Colonic mucosa (tissue), 4 donors: ENCODE measurements at regions of chr7 and their contacts with region 1.

Region 1: GRCh38 chr7:105060437-105060836 is 46.4 kb downstream of the KMT2E start:
- DNase-seq: no peak
- H3K4me3 ChIP-seq: no peak overlapping the region
- H3K27ac ChIP-seq: no peak overlapping the region
- H3K4me1 ChIP-seq: no peaks in the 10 kb centered on the region
- H3K27me3 ChIP-seq: no peaks in the 10 kb centered on the region
- CTCF ChIP-seq: no peak

Region 2: DNA sequence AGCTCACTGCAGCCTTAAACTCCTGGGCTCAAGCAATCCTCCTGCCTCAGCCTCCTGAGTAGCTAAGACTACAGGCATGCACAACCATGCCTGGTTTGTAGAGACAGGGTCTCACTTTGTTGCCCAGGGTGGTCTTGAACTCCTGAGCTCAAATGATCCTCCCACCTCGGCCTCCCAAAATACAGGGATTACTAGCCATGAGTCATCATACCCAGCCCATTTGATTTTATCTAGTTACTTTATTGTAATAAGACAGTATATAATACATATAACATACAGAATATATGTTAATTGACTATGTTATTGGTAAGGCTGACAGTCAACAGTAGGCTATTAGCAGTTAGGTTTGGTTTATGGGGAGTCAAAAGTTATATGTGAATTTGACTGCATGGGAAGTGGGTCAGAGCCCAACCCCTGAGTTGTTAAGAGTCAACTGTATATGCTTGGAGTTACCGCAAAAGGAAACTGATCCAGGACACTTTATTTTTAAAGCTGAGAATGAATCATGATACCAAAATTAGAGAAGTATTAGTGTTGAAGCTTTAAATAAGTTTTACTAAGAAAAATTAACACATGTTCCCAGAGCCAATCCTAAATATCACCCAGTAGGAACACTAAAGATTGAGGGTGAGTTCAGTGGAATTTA is 67.1 kb before region 1 on chr7:
- intact Hi-C with region 1: loop called (anchors 10 kb)
- DNase-seq: no peak
- H3K4me3 ChIP-seq: no peak overlapping the region
- H3K27ac ChIP-seq: no peak overlapping the region
- H3K4me1 ChIP-seq: peaks cover 6% of the 10 kb centered on the region
- H3K27me3 ChIP-seq: no peaks in the 10 kb centered on the region
- CTCF ChIP-seq: no peak

Region 3: DNA sequence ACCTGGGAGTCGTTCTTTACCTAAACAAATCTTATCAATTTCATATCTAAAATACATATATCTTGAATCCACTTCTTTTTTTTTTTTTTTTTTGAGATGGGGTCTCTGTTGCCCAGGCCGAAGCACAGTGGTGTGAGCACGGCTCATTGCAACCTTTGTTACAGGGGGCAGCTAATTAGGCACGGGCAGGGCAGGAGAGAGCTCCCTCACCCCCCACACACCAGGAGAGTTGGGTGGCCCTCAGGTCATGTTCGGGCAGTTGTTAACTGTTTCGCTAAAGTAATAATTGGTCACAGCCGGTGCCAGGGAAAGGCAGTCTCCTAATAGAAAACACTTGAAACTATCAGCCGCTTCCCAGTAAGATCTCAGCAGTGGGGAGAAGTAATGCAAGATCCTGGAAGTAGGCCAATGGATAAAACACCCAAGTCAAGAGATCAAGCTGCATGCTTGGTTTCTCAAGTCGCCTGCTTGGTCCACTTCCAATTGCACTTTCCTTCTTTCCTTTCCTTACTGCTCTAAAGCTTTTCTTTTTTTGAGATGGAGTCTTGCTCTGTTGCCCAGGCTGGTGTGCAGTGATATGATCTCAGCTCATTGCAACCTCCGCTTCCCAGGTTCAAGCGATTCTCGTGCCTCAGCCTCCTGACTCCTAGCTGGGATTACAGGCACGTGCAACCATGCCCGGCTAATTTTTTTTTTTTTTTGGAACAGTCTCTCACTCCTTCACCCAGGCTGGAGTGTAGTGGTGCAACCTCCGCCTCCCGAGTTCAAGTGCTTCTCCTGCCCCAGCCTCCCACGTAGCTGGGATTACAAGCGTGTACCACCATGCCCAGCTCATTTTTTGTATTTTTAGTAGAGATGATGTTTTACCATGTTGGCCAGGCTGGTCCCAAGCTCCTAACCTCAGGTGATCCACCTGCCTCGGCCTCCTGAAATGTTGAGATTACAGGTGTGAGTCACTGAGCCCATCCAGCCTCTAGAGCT is 542.2 kb after region 1 on chr7:
- intact Hi-C with region 1: no loop called
- DNase-seq: no peak
- H3K4me3 ChIP-seq: no peak overlapping the region
- H3K27ac ChIP-seq: no peak overlapping the region
- H3K4me1 ChIP-seq: no peaks in the 10 kb centered on the region
- H3K27me3 ChIP-seq: no peaks in the 10 kb centered on the region
- CTCF ChIP-seq: no peak